ENCODE measurements at regions of chr1 and their contacts with region 1.

Region 1: GRCh38 chr1:53393325-53393792 is 65.5 kb upstream of the LRP8 start:
- DNase-seq: peak; percentile 57 to 88
- H3K4me3 ChIP-seq: no peak overlapping the region
- H3K4me1 ChIP-seq: peaks cover 7% of the 10 kb centered on the region
- H3K27me3 ChIP-seq: 0 out of 2 replicates have a peak, but pooled peaks cover 5% of the 10 kb centered on the region

Region 2: DNA sequence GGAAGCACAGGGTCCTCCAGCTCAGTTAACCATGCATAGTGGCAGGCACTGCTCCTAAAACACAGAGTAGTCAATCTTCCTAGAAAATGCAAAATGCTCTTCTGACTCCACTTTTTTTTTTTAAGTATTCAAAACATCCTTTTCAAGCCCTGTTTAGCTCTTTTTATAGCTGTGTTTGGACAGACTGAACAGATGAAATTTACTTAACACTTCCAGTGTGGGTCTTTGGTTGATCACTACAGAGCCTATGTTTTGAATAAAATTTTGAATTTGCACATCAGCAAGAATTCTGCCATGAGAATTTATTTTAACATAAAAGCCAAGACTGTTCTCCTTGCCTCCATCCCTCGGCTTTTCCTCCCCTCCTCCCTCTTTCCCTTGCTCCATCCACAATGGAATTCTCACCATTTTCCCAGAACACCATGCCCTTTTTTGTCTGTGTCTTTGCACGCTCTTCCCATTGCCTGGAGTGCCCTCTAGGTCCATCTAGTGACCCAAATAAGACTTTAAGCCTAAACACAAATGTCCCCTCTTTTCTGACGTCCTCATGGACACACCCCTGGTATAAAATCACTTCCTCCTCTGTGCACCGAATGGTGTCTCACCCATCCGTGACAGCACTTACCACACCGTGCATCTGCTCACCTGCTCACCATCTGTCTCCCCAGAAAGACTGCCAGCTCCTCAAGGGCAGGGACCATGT is 220.8 kb before region 1 on chr1:
- in situ Hi-C with region 1: no loop called
- DNase-seq: no peak
- H3K4me3 ChIP-seq: no peak overlapping the region
- H3K4me1 ChIP-seq: peaks cover 6% of the 10 kb centered on the region
- H3K27me3 ChIP-seq: no peaks in the 10 kb centered on the region

Region 3: GRCh38 chr1:53278201-53278725 is 115.1 kb before region 1 on chr1:
- in situ Hi-C with region 1: loop called (anchors 5 kb)
- DNase-seq: peak in 1 of 2 experiments; percentile 81
- H3K4me3 ChIP-seq: no peak overlapping the region
- H3K4me1 ChIP-seq: no peaks in the 10 kb centered on the region
- H3K27me3 ChIP-seq: no peaks in the 10 kb centered on the region

Region 4: DNA sequence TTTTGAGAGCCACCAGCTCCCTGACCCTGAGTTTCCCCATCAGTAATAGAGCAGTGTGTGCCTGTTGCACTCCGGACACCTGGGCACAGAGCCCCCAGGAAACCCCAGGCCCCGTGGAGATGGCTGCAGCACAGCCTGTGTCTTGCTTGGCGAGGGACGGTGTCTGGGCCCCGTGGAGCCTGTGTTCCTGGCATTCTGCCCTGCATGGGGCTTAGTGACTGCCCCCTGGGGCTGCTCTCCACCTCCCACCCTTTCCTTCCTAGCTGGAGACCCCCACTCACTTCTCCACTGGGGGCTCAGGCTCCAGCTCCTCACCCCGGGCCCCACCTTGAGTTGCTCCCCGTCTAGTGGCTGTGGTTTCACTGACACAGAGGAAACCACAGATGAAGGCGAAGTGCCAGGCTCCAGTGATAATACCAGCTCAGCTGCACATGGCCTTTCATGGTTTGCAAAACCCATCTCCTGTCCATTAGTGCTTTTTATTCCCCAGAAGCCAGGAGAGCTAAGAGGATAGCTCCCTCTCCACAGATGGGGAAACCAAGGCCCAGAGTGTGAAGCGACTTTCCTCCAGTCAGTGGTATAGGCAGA is 105.3 kb after region 1 on chr1:
- in situ Hi-C with region 1: no loop called
- DNase-seq: no peak
- H3K4me3 ChIP-seq: no peak overlapping the region
- H3K4me1 ChIP-seq: no peaks in the 10 kb centered on the region
- H3K27me3 ChIP-seq: no peaks in the 10 kb centered on the region

Measured in HAP-1 (cell line).